PC-3 (cell line): ENCODE measurements at regions of chr4 and their contacts with region 1.

Region 1: GRCh38 chr4:74133786-74134499 is 24.0 kb upstream of the MTHFD2L start:
- DNase-seq: peak; percentile 96
- ATAC-seq: peak; percentile 99
- H3K4me3 ChIP-seq: no peak overlapping the region
- H3K27ac ChIP-seq: peak overlapping the region; percentile 59
- H3K4me1 ChIP-seq: peaks cover 7% of the 10 kb centered on the region
- H3K27me3 ChIP-seq: no peaks in the 10 kb centered on the region
- CTCF ChIP-seq: peak; percentile 98

Region 2: GRCh38 chr4:73653695-73654106 is 480.2 kb before region 1 on chr4:
- CTCF ChIA-PET with region 1: interaction called, 10 read pairs
- POLR2A ChIA-PET with region 1: no interaction called
- intact Hi-C with region 1: loop called (anchors 2 kb)
- DNase-seq: peak; percentile 90
- ATAC-seq: peak; percentile 74
- H3K4me3 ChIP-seq: no peak overlapping the region
- H3K27ac ChIP-seq: no peak overlapping the region
- H3K4me1 ChIP-seq: no peaks in the 10 kb centered on the region
- H3K27me3 ChIP-seq: no peaks in the 10 kb centered on the region
- CTCF ChIP-seq: peak; percentile 86

Region 3: DNA sequence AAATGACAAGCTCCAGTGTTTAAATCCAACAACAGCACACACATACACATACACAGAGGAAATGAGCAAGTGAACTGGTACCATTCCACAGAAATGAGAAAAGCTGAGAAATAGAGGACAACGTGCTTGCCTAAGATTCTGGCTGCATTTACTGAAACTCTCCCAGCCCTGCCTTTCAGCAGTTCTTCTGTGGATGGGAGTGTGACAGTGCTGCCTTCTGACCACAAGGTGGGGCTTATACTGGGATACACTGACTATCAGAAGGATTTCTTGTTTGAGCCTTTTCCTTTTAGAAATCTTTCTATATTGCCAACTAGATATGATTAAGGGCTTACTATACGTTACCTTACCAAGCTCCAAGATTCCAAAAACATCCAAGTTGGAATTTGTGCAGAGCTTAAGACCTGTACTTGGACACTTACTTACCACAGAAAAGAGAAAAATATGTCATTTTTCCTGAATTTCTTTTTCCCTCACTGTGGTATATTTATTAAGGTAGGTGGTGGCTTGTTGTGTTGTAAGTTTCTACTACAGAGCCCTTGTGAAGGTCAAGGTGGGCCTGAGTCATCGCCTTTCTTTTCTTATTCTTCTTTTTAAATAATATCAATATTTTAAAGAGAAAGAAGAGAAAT is 404.3 kb before region 1 on chr4:
- CTCF ChIA-PET with region 1: no interaction called
- POLR2A ChIA-PET with region 1: no interaction called
- intact Hi-C with region 1: loop called (anchors 1 kb)
- DNase-seq: peak; percentile 93
- ATAC-seq: peak; percentile 68
- H3K4me3 ChIP-seq: no peak overlapping the region
- H3K27ac ChIP-seq: peak overlapping the region; percentile 97
- H3K4me1 ChIP-seq: peaks cover 79% of the 10 kb centered on the region
- H3K27me3 ChIP-seq: no peaks in the 10 kb centered on the region
- CTCF ChIP-seq: peak; percentile 96

Region 4: GRCh38 chr4:73869130-73870050 is 264.6 kb before region 1 on chr4 and contains the start of gene CXCL1:
- CTCF ChIA-PET with region 1: interaction called, 8 read pairs
- POLR2A ChIA-PET with region 1: interaction called, 3 read pairs
- intact Hi-C with region 1: loop called (anchors 1 kb)
- DNase-seq: peak; percentile 56
- ATAC-seq: peak; percentile 29
- H3K4me3 ChIP-seq: peak within 1 kb of the TSS; percentile 65
- H3K27ac ChIP-seq: peak within 1 kb of the TSS; percentile 80
- H3K4me1 ChIP-seq: peaks cover 74% of the 10 kb centered on the region
- H3K27me3 ChIP-seq: no peaks in the 10 kb centered on the region
- CTCF ChIP-seq: no peak
- total RNA-seq, gene CXCL1: 239 and 267 TPM in 2 replicates

Region 5: GRCh38 chr4:74038161-74039064 is 95.5 kb before region 1 on chr4 and contains the start of gene CXCL3:
- CTCF ChIA-PET with region 1: interaction called, 4 read pairs
- POLR2A ChIA-PET with region 1: interaction called, 5 read pairs
- intact Hi-C with region 1: loop called (anchors 1 kb)
- DNase-seq: peak; percentile 78
- ATAC-seq: peak; percentile 86
- H3K4me3 ChIP-seq: peak within 1 kb of the TSS; percentile 78
- H3K27ac ChIP-seq: peak within 1 kb of the TSS; percentile 51
- H3K4me1 ChIP-seq: peaks cover 48% of the 10 kb centered on the region
- H3K27me3 ChIP-seq: no peaks in the 10 kb centered on the region
- CTCF ChIP-seq: peak; percentile 75
- total RNA-seq, gene CXCL3: 25.1 and 28.9 TPM in 2 replicates

Region 6: GRCh38 chr4:74098450-74098994 is 35.4 kb before region 1 on chr4:
- CTCF ChIA-PET with region 1: interaction called, 10 read pairs
- POLR2A ChIA-PET with region 1: no interaction called
- intact Hi-C with region 1: loop called (anchors 1 kb)
- DNase-seq: no peak
- ATAC-seq: peak; percentile 5
- H3K4me3 ChIP-seq: peak overlapping the region; percentile 78
- H3K27ac ChIP-seq: peak overlapping the region; percentile 98
- H3K4me1 ChIP-seq: peaks cover 28% of the 10 kb centered on the region
- H3K27me3 ChIP-seq: no peaks in the 10 kb centered on the region
- CTCF ChIP-seq: no peak